Naive thymus-derived CD8-positive, alpha-beta T cell (primary cell): ENCODE measurements at regions of chr3 and their contacts with region 1.

Region 1: DNA sequence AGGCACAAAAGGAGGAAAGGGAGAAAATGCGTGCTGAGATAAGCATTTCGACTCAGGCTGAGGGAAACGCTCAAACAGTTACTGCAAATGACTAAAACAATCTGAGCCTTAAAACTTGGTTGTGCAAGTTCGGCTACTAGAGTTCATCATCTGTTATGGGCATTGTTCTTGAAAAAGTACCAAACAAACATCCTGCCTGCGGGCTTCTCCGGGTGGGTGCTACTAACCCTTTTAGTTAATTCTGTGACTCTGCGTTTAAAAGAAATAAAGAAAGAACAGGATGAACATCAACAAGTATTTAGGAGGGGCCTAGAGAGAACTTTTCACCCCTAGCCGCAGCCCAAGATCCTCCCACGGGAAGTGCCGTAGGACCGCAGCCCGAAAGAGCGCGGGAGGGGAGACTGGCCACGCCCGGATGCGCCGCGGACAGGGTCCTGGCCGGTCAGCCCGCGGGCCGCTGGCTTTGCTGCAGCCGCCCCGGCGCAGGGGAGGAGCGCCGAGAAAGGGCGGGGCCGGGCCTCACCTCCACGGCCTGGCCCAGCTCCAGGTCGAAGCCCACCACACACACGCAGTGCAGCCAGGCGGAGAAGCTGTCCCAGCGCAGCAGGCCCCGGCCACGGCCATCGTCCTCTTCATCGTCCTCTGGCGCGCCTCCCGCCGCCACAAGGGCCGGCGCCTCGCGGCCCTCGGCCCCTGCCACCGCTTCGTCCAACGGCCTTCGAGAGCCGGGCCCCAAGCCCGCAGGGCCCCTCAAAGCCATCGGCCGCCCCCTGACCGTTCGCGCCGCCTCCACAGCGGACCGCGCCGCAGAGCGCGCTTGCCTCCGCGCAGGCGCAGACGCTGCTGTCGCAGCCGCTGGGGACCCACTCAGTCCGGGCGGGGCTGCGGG is at the start of gene DENND6A:
- DNase-seq: peak; percentile 91 to 99 (median 96)
- ATAC-seq: peak; percentile 78 to 82
- H3K4me3 Mint-ChIP-seq: peak within 1 kb of the TSS; percentile 85 to 94 (median 89)
- H3K27ac Mint-ChIP-seq: peak within 1 kb of the TSS; percentile 84 to 97 (median 92)
- H3K4me1 Mint-ChIP-seq: peaks cover 16 to 49% (median 35%) of the 10 kb centered on the region in 4 donors
- H3K27me3 Mint-ChIP-seq: no peaks in the 10 kb centered on the region
- polyA plus RNA-seq, gene DENND6A: 24.2 to 37.0 (median 31.0) TPM

Region 2: DNA sequence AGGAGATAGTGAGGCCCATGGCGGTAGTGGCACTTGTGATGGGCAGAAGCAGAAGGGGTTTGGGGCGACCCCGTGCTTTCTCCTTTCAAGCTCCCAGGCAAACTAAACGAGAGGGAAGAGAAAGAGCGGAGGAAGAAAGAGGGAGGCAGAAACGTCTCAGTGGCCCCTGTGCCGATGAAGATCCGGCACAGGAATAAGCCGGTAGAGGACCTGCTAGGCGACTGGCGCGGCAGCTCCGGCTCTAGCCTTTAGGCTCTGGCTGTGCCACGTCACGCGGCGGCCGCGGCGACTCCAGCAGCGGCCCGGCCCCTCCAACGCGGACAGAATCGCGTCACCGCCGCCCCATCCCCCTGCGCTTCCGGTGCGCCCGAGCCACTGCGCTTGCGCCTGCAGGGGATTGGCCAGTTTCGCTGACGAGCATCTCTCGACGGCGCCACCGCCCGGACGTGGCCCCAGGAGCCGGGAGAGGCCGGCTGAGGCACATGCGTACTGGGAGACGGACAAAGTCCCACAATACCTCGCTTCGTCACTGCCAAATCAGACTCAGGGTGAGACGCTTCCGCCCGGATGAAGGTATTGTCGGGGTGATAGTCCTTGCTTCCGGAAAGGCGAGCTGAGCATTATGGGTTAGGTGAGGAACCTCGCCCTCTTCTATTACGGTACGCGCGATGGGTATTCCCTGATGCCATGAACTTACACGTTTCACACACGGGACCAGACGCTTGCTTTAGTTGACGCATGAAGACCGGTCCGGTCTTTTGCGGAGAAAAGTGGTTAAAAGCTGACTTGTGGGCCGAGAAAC is 95.2 kb before region 1 on chr3 and contains the start of gene ARF4:
- POLR2A ChIA-PET with region 1: interaction called, 21 read pairs
- DNase-seq: peak; percentile 97 to 100 (median 100)
- ATAC-seq: peak; percentile 84 to 89
- H3K4me3 Mint-ChIP-seq: peak within 1 kb of the TSS; percentile 96 to 99 (median 98)
- H3K27ac Mint-ChIP-seq: peak within 1 kb of the TSS; percentile 97 to 100 (median 99)
- H3K4me1 Mint-ChIP-seq: peaks cover 22 to 59% (median 56%) of the 10 kb centered on the region in 4 donors
- H3K27me3 Mint-ChIP-seq: no peaks in the 10 kb centered on the region
- polyA plus RNA-seq, gene ARF4: 112 to 116 (median 115) TPM

Region 3: GRCh38 chr3:57637391-57637790 is 55.1 kb before region 1 on chr3:
- POLR2A ChIA-PET with region 1: no interaction called
- DNase-seq: no peak
- ATAC-seq: no peak
- H3K4me3 Mint-ChIP-seq: no peak overlapping the region
- H3K27ac Mint-ChIP-seq: peak overlapping the region in 2 of 10 donors; percentile 6 to 52
- H3K4me1 Mint-ChIP-seq: peaks cover 0 to 6% (median 2%) of the 10 kb centered on the region in 4 donors
- H3K27me3 Mint-ChIP-seq: no peaks in the 10 kb centered on the region

Region 4: GRCh38 chr3:57670543-57670942 is 22.0 kb before region 1 on chr3:
- POLR2A ChIA-PET with region 1: interaction called, 10 read pairs
- DNase-seq: no peak
- ATAC-seq: no peak
- H3K4me3 Mint-ChIP-seq: no peak overlapping the region
- H3K27ac Mint-ChIP-seq: peak overlapping the region in 6 of 10 donors; percentile 25 to 81 (median 64)
- H3K4me1 Mint-ChIP-seq: peaks cover 12 to 46% (median 41%) of the 10 kb centered on the region in 4 donors
- H3K27me3 Mint-ChIP-seq: no peaks in the 10 kb centered on the region

Region 5: GRCh38 chr3:57682284-57682683 is 10.2 kb before region 1 on chr3:
- POLR2A ChIA-PET with region 1: interaction called, 14 read pairs
- DNase-seq: no peak
- ATAC-seq: no peak
- H3K4me3 Mint-ChIP-seq: peak overlapping the region in 8 of 10 donors; percentile 21 to 57 (median 39)
- H3K27ac Mint-ChIP-seq: peak overlapping the region in 1 of 10 donors; percentile 20
- H3K4me1 Mint-ChIP-seq: peaks cover 35 to 85% (median 80%) of the 10 kb centered on the region in 4 donors
- H3K27me3 Mint-ChIP-seq: no peaks in the 10 kb centered on the region

Region 6: DNA sequence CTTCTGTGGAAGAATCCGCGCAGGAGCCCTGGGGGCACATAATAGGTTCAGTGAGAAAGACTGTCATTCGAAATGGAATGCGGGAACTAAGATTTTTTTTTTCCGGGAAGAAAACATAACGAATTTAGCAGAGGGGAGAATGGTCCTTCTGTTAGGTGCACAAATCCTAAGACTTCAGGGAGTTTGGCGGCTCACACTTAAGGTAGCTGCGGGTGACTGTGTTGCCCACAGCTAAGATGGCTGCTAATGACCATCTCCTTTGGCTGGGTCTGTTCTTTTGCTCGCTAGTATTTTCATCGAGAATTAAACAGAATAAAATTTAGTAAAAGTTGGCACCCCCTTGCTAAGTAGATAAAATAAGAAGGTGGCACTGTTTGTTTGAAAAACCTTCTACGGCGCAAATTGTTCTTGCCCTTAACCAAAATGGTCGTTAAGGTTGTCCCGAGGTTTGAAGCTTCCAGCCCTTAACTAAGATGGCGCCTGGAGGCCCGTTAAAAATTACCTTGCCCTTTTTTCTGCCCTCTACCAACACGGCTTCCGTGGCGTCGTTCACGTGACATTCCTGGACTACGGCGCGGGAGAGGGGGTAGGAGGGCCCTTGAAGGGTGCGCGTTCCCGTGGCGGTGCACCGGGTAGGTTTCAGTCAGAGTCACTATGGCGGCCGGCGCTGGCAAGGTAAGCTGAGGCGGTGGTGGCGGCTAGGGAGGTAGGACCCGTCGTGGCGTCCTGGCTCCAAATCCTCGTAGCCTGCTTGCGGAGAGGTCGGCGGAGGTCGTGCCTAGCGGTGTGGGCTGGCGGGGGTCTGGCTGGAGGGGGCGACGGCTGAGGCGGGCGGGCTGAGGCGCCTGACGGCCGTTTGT is 63.4 kb after region 1 on chr3 and contains the start of gene SLMAP:
- POLR2A ChIA-PET with region 1: interaction called, 28 read pairs
- DNase-seq: peak; percentile 86 to 98 (median 95)
- ATAC-seq: peak; percentile 93 to 94
- H3K4me3 Mint-ChIP-seq: peak within 1 kb of the TSS; percentile 91 to 98 (median 94)
- H3K27ac Mint-ChIP-seq: peak within 1 kb of the TSS; percentile 94 to 98 (median 96)
- H3K4me1 Mint-ChIP-seq: peaks cover 4 to 46% (median 37%) of the 10 kb centered on the region in 4 donors
- H3K27me3 Mint-ChIP-seq: no peaks in the 10 kb centered on the region
- polyA plus RNA-seq, gene SLMAP: 19.6 to 24.5 (median 23.7) TPM